AG04449 (cell line): ENCODE measurements at regions of chr9 and their contacts with region 1.

Region 1: GRCh38 chr9:115524453-115525059 is 406.6 kb upstream of the TNC start:
- DNase-seq: no peak
- H3K4me3 ChIP-seq: no peak overlapping the region
- CTCF ChIP-seq: peak; percentile 55

Region 2: DNA sequence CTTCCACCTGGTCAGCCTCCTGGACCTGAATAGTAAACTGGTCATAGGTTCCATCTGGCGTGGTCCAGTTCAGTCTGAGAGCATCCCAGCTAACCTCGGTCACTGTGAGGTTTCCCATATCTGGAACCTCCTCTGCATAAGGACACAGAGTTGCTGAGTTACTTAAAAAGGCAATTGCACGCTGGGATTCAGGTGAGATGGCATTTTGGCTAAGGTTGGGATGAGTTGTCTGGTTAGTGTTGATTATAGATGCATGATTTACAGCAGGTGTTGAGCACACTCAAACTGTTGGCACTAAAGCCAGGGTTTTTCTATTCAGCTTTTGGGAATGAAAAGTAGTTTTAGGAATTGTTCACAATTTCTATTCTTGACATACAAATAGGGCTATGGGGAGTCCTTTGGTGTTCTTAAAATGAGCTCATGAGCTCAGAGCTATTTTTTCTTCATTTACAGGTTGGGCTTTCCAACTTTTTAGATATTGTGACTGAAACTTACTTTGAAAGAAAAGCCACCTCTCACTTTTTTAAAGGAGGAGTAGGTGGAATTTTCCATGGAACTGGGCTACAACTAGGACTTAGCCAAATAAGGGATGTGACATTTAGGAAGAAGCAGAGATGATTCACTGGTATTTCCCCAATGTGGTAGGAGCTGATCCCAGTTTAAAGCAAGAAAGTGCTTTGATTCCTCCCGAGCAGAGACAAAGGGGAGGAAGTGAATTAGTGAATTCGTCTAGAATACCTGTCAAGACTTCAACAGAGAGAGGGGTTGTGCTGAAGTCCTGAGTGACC is 461.3 kb before region 1 on chr9:
- CTCF ChIA-PET with region 1: interaction called, 29 read pairs
- POLR2A ChIA-PET with region 1: no interaction called
- DNase-seq: peak; percentile 47
- H3K4me3 ChIP-seq: no peak overlapping the region
- CTCF ChIP-seq: no peak

Region 3: DNA sequence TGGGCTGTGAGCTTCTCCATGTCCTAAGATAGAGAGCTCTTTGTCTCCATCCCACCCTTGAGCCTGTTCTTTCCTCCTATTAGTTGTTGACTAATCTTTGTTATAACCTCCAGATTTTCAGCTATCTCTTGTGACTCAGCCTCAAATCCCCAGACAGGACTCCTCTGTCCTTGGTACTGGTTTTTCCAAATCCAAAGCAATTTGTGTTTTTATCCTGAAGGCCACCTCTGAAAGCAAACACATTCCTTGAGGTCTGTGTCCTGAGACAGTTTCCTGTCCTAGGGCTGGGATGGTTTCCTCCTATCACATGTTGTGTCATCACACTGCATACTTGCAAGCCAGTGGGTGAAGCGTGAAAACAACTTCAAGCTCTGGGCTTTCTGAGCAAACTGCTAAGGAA is 415.1 kb before region 1 on chr9:
- CTCF ChIA-PET with region 1: interaction called, 15 read pairs
- POLR2A ChIA-PET with region 1: no interaction called
- DNase-seq: no peak
- H3K4me3 ChIP-seq: no peak overlapping the region
- CTCF ChIP-seq: no peak

Region 4: DNA sequence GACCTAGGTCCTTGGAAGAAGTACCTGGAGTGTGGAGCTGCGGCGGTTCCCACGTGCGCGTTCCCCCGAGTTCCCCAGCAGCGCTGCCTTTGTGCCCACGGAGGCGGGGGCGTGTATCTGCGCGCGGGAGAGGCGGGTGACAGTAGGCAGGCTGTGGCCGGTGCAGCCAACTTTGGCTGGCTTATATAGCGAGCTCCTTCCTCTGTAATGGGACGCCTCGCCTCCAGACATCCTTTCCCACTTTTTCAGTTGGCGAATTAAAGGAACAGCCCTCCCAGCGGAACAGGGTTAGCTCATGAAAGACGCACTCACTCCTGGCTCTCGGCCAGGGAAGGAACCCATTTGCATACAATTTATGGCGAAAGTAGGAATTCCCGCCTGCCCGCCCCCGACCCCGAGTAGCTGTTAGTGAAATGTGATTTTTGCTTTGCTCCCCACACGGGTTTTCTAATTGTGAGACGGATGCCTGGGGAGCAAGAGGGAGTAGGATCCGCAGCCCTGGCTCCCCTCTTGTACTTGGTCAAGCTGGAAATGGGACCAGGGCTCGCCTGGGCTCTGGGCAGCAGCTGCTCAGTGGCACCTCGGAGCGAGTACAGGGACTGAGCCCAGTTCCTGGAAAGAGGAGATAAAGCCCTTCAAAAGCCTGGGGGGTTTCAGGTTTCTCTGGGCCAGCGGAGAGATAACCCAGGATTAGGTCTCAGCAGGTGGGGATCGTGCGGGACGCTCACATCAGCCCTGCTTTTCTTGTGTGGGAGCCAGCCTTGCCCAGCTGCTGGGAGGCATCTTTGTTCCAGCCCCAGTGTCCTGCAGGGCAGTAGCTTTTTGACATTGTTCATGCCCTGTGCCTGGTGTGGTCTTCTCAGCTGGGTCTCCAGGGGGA is 406.3 kb before region 1 on chr9 and contains the start of gene TNC:
- CTCF ChIA-PET with region 1: interaction called, 24 read pairs
- POLR2A ChIA-PET with region 1: no interaction called
- DNase-seq: no peak
- H3K4me3 ChIP-seq: peak within 1 kb of the TSS; percentile 79
- CTCF ChIP-seq: no peak

Region 5: GRCh38 chr9:115202960-115203751 is 321.4 kb before region 1 on chr9:
- CTCF ChIA-PET with region 1: interaction called, 16 read pairs
- POLR2A ChIA-PET with region 1: interaction called, 3 read pairs
- DNase-seq: peak; percentile 90
- H3K4me3 ChIP-seq: no peak overlapping the region
- CTCF ChIP-seq: peak; percentile 30

Region 6: GRCh38 chr9:115422932-115423440 is 101.6 kb before region 1 on chr9:
- CTCF ChIA-PET with region 1: no interaction called
- POLR2A ChIA-PET with region 1: no interaction called
- DNase-seq: no peak
- H3K4me3 ChIP-seq: no peak overlapping the region
- CTCF ChIP-seq: no peak

Region 7: GRCh38 chr9:115540091-115540490 is 15.5 kb after region 1 on chr9:
- CTCF ChIA-PET with region 1: interaction called, 10 read pairs
- POLR2A ChIA-PET with region 1: no interaction called
- DNase-seq: no peak
- H3K4me3 ChIP-seq: no peak overlapping the region
- CTCF ChIP-seq: no peak

Region 8: DNA sequence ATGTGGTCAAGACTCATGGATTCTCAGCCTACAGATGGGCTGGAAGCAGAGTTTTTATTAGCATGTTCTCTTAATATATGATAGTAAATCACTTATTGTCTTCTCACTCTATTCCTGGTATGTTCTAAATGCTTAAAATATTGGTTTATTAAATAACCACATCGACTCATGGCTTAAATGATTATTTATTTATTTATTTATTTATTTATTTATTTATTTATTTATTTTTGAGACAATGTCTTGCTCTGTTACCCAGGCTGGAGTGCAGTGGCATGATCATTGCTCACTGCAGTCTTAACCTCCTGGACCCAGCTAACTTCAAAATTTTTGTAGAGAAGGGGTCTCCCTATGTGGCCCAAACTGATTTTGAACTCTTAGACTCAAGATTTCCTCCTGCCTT is 50.6 kb after region 1 on chr9:
- CTCF ChIA-PET with region 1: no interaction called
- POLR2A ChIA-PET with region 1: no interaction called
- DNase-seq: no peak
- H3K4me3 ChIP-seq: no peak overlapping the region
- CTCF ChIP-seq: no peak

Region 9: DNA sequence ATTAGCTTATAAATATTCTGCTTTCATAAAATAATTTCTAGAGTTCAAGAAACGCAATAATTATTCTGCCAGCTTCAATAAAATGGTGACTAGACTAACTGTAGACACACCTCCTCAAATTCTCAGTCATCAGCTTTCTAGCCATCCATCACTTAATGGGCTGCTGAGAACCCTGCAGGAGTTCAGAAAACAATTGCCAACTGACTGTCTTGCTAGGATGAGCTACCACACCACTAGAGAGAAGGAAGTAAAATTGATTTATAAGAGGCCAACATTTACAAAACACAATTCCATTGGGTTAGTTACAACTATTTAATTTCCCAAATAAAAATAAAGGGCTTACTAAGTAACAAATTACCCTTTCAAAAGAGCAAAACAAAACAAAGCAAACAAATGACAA is 502.5 kb after region 1 on chr9:
- CTCF ChIA-PET with region 1: no interaction called
- POLR2A ChIA-PET with region 1: no interaction called
- DNase-seq: no peak
- H3K4me3 ChIP-seq: no peak overlapping the region
- CTCF ChIP-seq: no peak